ENCODE measurements at regions of chrX and their contacts with region 1.

Region 1: DNA sequence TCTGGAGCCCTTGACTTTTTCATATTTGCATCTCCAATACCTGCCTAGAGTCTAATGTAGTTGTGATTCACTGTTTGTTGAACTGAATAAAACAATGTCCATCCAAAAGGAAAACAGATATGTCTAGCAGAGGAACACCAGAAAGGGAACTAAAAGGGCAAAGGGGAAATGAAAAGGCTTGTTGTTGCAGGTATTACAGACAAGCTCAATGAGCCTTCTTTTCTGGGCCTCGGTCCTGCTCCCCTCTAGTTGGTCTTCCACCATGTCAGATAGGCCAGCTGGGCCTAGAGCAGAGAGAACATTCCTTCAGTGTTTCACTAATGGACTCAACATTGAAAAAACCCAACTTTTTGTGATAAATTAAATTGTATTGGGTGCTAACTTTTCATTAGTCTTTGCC is 55.4 kb downstream of the ZFX start:
- DNase-seq: no peak
- ATAC-seq: no peak
- H3K4me3 ChIP-seq: no peak overlapping the region
- H3K4me3 Mint-ChIP-seq: no peak overlapping the region
- H3K27ac ChIP-seq: no peak overlapping the region
- H3K27ac Mint-ChIP-seq: peak overlapping the region; percentile 30 to 40
- H3K4me1 ChIP-seq: peaks cover 0 to 5% of the 10 kb centered on the region in 2 experiments
- H3K4me1 Mint-ChIP-seq: peaks cover 43 to 51% (median 49%) of the 10 kb centered on the region in 3 donors
- H3K27me3 ChIP-seq: no peaks in the 10 kb centered on the region
- H3K27me3 Mint-ChIP-seq: no peaks in the 10 kb centered on the region

Region 2: DNA sequence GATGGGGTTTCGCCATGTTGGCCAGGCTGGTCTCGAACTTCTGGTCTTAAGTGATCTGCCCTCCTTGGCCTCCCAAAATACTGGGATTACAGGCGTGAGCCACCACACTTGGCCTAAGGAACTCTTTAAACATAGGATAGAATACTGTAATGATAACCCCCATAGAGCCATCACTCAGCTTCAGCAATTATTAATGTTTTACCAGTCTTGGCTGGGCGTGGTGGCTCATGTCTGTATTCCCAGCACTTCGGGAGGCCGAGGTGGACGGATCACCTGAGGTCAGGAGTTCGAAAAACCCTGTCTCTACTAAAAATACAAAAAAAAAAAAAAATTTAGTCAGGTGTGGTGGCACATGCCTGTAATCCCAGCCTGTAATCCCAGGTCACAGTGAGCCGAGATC is 135.1 kb before region 1 on chrX:
- CTCF ChIA-PET with region 1: no interaction called
- POLR2A ChIA-PET with region 1: interaction called in 1 of 2 experiments, 16 read pairs
- DNase-seq: no peak
- ATAC-seq: no peak
- H3K4me3 ChIP-seq: no peak overlapping the region
- H3K4me3 Mint-ChIP-seq: no peak overlapping the region
- H3K27ac ChIP-seq: no peak overlapping the region
- H3K27ac Mint-ChIP-seq: no peak overlapping the region
- H3K4me1 ChIP-seq: no peaks in the 10 kb centered on the region
- H3K4me1 Mint-ChIP-seq: peaks cover 0 to 3% (median 0%) of the 10 kb centered on the region in 3 donors
- H3K27me3 ChIP-seq: no peaks in the 10 kb centered on the region
- H3K27me3 Mint-ChIP-seq: no peaks in the 10 kb centered on the region

Region 3: GRCh38 chrX:24241822-24242648 is 37.1 kb after region 1 on chrX:
- CTCF ChIA-PET with region 1: interaction called in 1 of 2 experiments, 12 read pairs
- POLR2A ChIA-PET with region 1: no interaction called
- DNase-seq: peak in 2 of 35 experiments; percentile 6 to 49
- ATAC-seq: peak in 1 of 4 experiments; percentile 35
- H3K4me3 ChIP-seq: no peak overlapping the region
- H3K4me3 Mint-ChIP-seq: no peak overlapping the region
- H3K27ac ChIP-seq: no peak overlapping the region
- H3K27ac Mint-ChIP-seq: no peak overlapping the region
- H3K4me1 ChIP-seq: no peaks in the 10 kb centered on the region
- H3K4me1 Mint-ChIP-seq: no peaks in the 10 kb centered on the region
- H3K27me3 ChIP-seq: no peaks in the 10 kb centered on the region
- H3K27me3 Mint-ChIP-seq: peaks cover 3 to 15% of the 10 kb centered on the region in 2 donors

Measured in T-cell (primary cell).